Activated CD4-positive, alpha-beta memory T cell treated with anti-CD3 and anti-CD28 coated beads for 36 hours (primary cell): ENCODE measurements at regions of chr18 and their contacts with region 1.

Region 1: GRCh38 chr18:79951578-79952455 is at the start of gene SLC66A2:
- DNase-seq: peak; percentile 95
- H3K4me3 Mint-ChIP-seq: peak within 1 kb of the TSS; percentile 79
- H3K27ac Mint-ChIP-seq: peak within 1 kb of the TSS; percentile 42
- H3K4me1 Mint-ChIP-seq: peaks cover 29% of the 10 kb centered on the region
- H3K27me3 Mint-ChIP-seq: no peaks in the 10 kb centered on the region
- total RNA-seq, gene SLC66A2: 27.2 to 29.5 TPM

Region 2: DNA sequence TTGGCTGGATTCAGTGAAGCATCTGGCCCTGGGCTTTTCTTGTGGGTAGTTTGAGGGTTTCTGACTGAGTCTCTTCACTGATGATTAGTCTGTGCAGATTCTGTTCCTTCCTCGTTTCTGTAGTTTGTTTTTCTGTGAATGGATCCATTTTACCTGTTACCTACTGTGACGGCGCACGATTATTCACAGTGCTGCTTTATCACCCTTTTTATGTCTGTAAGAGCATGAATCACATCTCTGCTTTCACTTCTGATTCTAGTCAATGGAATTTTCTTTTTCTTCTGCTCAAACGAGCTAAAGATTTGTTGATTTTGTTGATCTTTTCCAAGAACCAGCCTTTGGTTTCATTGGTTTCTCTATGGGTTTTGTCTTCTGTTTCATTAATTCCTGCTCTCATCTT is 61.1 kb before region 1 on chr18:
- CTCF ChIA-PET with region 1: no interaction called
- POLR2A ChIA-PET with region 1: no interaction called
- intact Hi-C with region 1: loop called (anchors 2 kb)
- DNase-seq: peak; percentile 49
- H3K4me3 Mint-ChIP-seq: no peak overlapping the region
- H3K27ac Mint-ChIP-seq: peak overlapping the region; percentile 76
- H3K4me1 Mint-ChIP-seq: peaks cover 9% of the 10 kb centered on the region
- H3K27me3 Mint-ChIP-seq: no peaks in the 10 kb centered on the region

Region 3: GRCh38 chr18:79964330-79965118 is 12.7 kb after region 1 on chr18 and contains the start of gene HSBP1L1:
- CTCF ChIA-PET with region 1: interaction called, 5 read pairs
- POLR2A ChIA-PET with region 1: interaction called, 8 read pairs
- intact Hi-C with region 1: loop called (anchors 1 kb)
- DNase-seq: peak; percentile 79
- H3K4me3 Mint-ChIP-seq: peak within 1 kb of the TSS; percentile 72
- H3K27ac Mint-ChIP-seq: peak within 1 kb of the TSS; percentile 77
- H3K4me1 Mint-ChIP-seq: peaks cover 35% of the 10 kb centered on the region
- H3K27me3 Mint-ChIP-seq: peaks cover 4% of the 10 kb centered on the region
- total RNA-seq, gene HSBP1L1: 8.5 to 8.8 TPM

Region 4: GRCh38 chr18:79988451-79989194 is 36.8 kb after region 1 on chr18 and contains the start of gene TXNL4A:
- CTCF ChIA-PET with region 1: interaction called, 3 read pairs
- POLR2A ChIA-PET with region 1: interaction called, 12 read pairs
- intact Hi-C with region 1: loop called (anchors 2 kb)
- DNase-seq: peak; percentile 90
- H3K4me3 Mint-ChIP-seq: peak within 1 kb of the TSS; percentile 94
- H3K27ac Mint-ChIP-seq: peak within 1 kb of the TSS; percentile 92
- H3K4me1 Mint-ChIP-seq: peaks cover 30% of the 10 kb centered on the region
- H3K27me3 Mint-ChIP-seq: no peaks in the 10 kb centered on the region
- total RNA-seq, gene TXNL4A: 169 to 175 TPM

Region 5: DNA sequence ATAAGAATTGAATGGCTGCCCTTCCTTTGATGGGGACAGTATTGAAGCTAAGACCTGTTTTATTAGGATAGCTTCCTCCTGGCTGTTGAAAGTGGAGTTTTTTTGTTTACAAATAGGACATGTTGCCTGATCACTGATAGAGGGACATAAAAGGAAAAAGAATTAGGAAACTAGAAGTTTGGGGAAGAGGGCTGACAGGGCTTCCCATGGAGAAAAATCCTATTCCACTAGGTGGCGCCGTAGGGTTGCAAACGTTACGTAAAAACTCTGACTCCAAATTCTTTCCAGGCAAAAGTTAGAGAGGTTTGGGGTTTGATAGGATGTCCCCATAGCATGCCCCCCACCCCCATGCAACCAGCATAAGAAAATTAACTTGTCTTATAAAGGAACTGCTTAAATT is 71.4 kb after region 1 on chr18:
- CTCF ChIA-PET with region 1: no interaction called
- POLR2A ChIA-PET with region 1: no interaction called
- intact Hi-C with region 1: no loop called
- DNase-seq: peak; percentile 25
- H3K4me3 Mint-ChIP-seq: no peak overlapping the region
- H3K27ac Mint-ChIP-seq: no peak overlapping the region
- H3K4me1 Mint-ChIP-seq: no peaks in the 10 kb centered on the region
- H3K27me3 Mint-ChIP-seq: no peaks in the 10 kb centered on the region

Region 6: GRCh38 chr18:80108728-80109675 is 157.2 kb after region 1 on chr18 and contains the start of gene ADNP2:
- CTCF ChIA-PET with region 1: no interaction called
- POLR2A ChIA-PET with region 1: no interaction called
- intact Hi-C with region 1: loop called (anchors 2 kb)
- DNase-seq: peak; percentile 91
- H3K4me3 Mint-ChIP-seq: peak within 1 kb of the TSS; percentile 80
- H3K27ac Mint-ChIP-seq: peak within 1 kb of the TSS; percentile 74
- H3K4me1 Mint-ChIP-seq: peaks cover 46% of the 10 kb centered on the region
- H3K27me3 Mint-ChIP-seq: no peaks in the 10 kb centered on the region
- total RNA-seq, gene ADNP2: 19.4 to 21.7 TPM

Region 7: DNA sequence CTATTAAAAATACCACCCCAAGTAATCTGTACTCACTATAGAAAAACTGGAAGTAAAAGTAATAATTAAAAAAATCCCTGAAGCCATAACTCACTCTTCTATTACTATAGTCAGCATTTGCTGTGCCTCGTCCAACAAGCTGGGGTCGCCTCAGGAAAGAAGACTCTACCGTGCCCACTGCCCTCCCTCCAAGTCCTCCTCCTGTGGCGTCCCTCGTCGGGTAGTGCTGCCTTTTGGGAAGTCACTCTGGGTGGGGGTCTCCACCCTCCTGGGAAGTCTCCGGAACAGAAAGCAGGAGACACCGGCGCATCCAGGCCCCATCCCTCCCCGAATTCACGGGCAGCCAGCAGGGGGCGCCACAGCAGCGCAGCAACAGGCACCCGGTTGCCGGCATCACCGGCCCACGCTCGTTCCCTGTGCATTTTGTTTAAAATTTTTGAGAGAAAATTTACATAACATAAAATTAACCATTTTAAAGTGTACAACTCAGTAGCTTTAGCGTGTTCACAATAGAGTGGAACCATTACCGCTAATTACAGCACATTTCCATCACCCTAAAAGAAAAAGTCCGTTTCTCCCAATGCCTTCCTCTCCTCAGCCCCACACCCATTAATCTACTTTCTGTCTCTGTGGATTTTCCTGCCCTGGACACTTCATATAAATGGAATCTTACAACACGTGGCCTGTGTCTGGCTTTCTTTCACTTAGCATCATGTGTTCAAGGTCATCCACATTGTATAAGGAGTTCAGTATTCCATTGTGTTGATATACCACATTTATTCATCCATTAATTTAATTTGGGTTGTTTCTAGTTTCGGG is 219.4 kb after region 1 on chr18:
- CTCF ChIA-PET with region 1: no interaction called
- POLR2A ChIA-PET with region 1: no interaction called
- intact Hi-C with region 1: no loop called
- DNase-seq: peak; percentile 71
- H3K4me3 Mint-ChIP-seq: no peak overlapping the region
- H3K27ac Mint-ChIP-seq: no peak overlapping the region
- H3K4me1 Mint-ChIP-seq: peaks cover 16% of the 10 kb centered on the region
- H3K27me3 Mint-ChIP-seq: peaks cover 36% of the 10 kb centered on the region